Activated CD4-positive, alpha-beta memory T cell treated with anti-CD3 and anti-CD28 coated beads, Interleukin-2, amount 10 ng/mL, durations not matched to agents 7 days and 5 days (primary cell): ENCODE measurements at regions of chr10 and their contacts with region 1.

Region 1: DNA sequence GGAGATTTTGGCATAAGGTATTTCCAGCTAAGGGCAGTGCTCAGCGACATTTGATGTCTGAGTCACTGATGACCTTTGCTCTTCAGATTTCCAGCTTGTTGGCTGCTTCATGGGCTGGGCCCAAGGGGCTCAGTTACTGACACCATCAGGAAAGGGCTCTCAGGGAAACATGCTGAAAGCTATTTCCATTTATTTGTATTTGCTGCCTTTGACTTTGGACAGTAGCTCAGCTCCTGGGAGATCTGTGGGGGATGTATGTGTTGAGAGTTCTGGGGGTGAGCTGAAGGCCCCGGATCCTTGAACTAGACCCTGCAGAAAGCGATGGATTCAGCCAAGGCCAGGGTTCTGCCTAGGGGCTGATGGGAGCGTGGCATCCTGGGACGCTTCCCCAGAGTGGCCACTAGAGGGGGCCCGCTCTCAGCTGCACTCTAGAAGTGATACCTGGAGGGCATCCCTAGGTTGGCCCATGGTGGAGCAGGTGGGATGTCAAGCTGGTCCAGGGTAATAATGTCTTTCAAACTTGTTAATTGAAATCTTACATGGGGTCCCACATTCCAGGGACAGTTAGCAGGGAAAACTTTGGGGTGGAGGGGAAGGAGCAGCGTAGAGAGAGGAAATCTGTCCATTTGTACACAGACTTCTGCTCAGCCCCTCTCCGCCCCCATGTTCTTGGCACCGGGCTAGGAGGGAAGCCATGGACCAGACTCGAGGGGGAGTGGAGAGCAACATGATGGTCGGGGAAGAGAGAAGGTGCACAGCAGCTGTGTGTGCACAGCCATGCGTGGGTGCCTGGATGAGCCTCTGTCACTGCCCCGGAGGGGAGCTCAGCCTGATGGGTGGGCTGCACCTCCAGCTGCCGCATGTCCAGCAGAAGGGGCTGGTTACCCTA is 3.0 kb upstream of the BTBD16 start:
- DNase-seq: peak; percentile 56
- H3K4me3 Mint-ChIP-seq: no peak overlapping the region
- H3K27ac Mint-ChIP-seq: no peak overlapping the region
- H3K4me1 Mint-ChIP-seq: no peaks in the 10 kb centered on the region
- H3K27me3 Mint-ChIP-seq: peaks cover 10% of the 10 kb centered on the region

Region 2: GRCh38 chr10:122154545-122155366 is 113.3 kb before region 1 on chr10:
- CTCF ChIA-PET with region 1: no interaction called
- POLR2A ChIA-PET with region 1: no interaction called
- DNase-seq: no peak
- H3K4me3 Mint-ChIP-seq: no peak overlapping the region
- H3K27ac Mint-ChIP-seq: no peak overlapping the region
- H3K4me1 Mint-ChIP-seq: no peaks in the 10 kb centered on the region
- H3K27me3 Mint-ChIP-seq: peaks cover 12% of the 10 kb centered on the region

Region 3: DNA sequence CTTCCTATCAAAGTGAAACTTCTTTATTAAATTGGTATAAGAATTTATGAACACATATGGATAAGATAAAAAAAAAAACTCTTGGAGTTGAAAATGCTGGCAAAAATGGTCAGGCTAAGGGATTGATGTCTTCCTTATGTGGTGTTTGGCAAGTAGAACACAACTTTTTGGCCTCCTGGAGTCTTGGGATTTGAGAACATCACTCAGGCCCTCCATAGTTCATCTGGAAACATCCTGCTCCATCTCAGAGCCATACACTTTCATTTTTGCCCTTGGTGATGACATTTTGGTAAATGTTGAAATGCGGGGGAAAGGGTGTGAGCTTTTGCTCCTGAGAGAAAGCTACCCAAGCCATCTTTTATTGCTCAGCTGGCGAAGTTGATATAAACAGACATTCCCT is 24.5 kb before region 1 on chr10:
- CTCF ChIA-PET with region 1: no interaction called
- POLR2A ChIA-PET with region 1: no interaction called
- DNase-seq: no peak
- H3K4me3 Mint-ChIP-seq: no peak overlapping the region
- H3K27ac Mint-ChIP-seq: no peak overlapping the region
- H3K4me1 Mint-ChIP-seq: no peaks in the 10 kb centered on the region
- H3K27me3 Mint-ChIP-seq: peaks cover 2% of the 10 kb centered on the region

Region 4: GRCh38 chr10:122279725-122280141 is 11.6 kb after region 1 on chr10:
- CTCF ChIA-PET with region 1: interaction called, 14 read pairs
- POLR2A ChIA-PET with region 1: no interaction called
- DNase-seq: peak; percentile 27
- H3K4me3 Mint-ChIP-seq: no peak overlapping the region
- H3K27ac Mint-ChIP-seq: no peak overlapping the region
- H3K4me1 Mint-ChIP-seq: no peaks in the 10 kb centered on the region
- H3K27me3 Mint-ChIP-seq: peaks cover 9% of the 10 kb centered on the region